Activated CD4-positive, alpha-beta T cell treated with anti-CD3 and anti-CD28 coated beads, Interleukin-2, amount 10 ng/mL, durations not matched to agents 24 days and 14 days (primary cell): ENCODE measurements at regions of chr3 and their contacts with region 1.

Region 1: GRCh38 chr3:189947948-189948723 is 172.6 kb downstream of the P3H2 start:
- DNase-seq: peak; percentile 75
- H3K4me3 Mint-ChIP-seq: peak overlapping the region; percentile 24
- H3K27ac Mint-ChIP-seq: peak overlapping the region; percentile 38
- H3K4me1 Mint-ChIP-seq: peaks cover 3% of the 10 kb centered on the region
- H3K27me3 Mint-ChIP-seq: peaks cover 5% of the 10 kb centered on the region

Region 2: GRCh38 chr3:189507856-189508255 is 440.3 kb before region 1 on chr3:
- intact Hi-C with region 1: loop called (anchors 10 kb)
- DNase-seq: no peak
- H3K4me3 Mint-ChIP-seq: no peak overlapping the region
- H3K27ac Mint-ChIP-seq: no peak overlapping the region
- H3K4me1 Mint-ChIP-seq: peaks cover 1% of the 10 kb centered on the region
- H3K27me3 Mint-ChIP-seq: no peaks in the 10 kb centered on the region

Region 3: GRCh38 chr3:189883113-189883753 is 64.9 kb before region 1 on chr3:
- intact Hi-C with region 1: no loop called
- DNase-seq: no peak
- H3K4me3 Mint-ChIP-seq: no peak overlapping the region
- H3K27ac Mint-ChIP-seq: no peak overlapping the region
- H3K4me1 Mint-ChIP-seq: no peaks in the 10 kb centered on the region
- H3K27me3 Mint-ChIP-seq: peaks cover 2% of the 10 kb centered on the region